ENCODE measurements at regions of chr2 and their contacts with region 1.

Region 1: GRCh38 chr2:226423498-226423960 is 376.1 kb downstream of the IRS1 start:
- DNase-seq: peak; percentile 40
- H3K4me3 Mint-ChIP-seq: no peak overlapping the region
- H3K27ac Mint-ChIP-seq: no peak overlapping the region
- H3K4me1 Mint-ChIP-seq: peaks cover 12% of the 10 kb centered on the region
- H3K27me3 Mint-ChIP-seq: peaks cover 22% of the 10 kb centered on the region

Region 2: GRCh38 chr2:226325526-226325925 is 98.0 kb before region 1 on chr2:
- intact Hi-C with region 1: no loop called
- DNase-seq: no peak
- H3K4me3 Mint-ChIP-seq: no peak overlapping the region
- H3K27ac Mint-ChIP-seq: no peak overlapping the region
- H3K4me1 Mint-ChIP-seq: no peaks in the 10 kb centered on the region
- H3K27me3 Mint-ChIP-seq: no peaks in the 10 kb centered on the region

Region 3: GRCh38 chr2:226649871-226650660 is 226.5 kb after region 1 on chr2:
- intact Hi-C with region 1: loop called (anchors 5 kb)
- DNase-seq: peak; percentile 39
- H3K4me3 Mint-ChIP-seq: no peak overlapping the region
- H3K27ac Mint-ChIP-seq: peak overlapping the region; percentile 60
- H3K4me1 Mint-ChIP-seq: peaks cover 33% of the 10 kb centered on the region
- H3K27me3 Mint-ChIP-seq: no peaks in the 10 kb centered on the region

Measured in activated T-helper 2 cell treated with anti-CD3 and anti-CD28 coated beads, Interferon-gamma antibody, Interleukin-2, Interleukin-4, amounts not matched to agents 10 μg/mL and 5 μg/mL and 100 μg/mL, durations not matched to agents 14 hours and 24 hours and 36 hours (primary cell).